Calu3 (cell line): ENCODE measurements at regions of chr1 and their contacts with region 1.

Region 1: DNA sequence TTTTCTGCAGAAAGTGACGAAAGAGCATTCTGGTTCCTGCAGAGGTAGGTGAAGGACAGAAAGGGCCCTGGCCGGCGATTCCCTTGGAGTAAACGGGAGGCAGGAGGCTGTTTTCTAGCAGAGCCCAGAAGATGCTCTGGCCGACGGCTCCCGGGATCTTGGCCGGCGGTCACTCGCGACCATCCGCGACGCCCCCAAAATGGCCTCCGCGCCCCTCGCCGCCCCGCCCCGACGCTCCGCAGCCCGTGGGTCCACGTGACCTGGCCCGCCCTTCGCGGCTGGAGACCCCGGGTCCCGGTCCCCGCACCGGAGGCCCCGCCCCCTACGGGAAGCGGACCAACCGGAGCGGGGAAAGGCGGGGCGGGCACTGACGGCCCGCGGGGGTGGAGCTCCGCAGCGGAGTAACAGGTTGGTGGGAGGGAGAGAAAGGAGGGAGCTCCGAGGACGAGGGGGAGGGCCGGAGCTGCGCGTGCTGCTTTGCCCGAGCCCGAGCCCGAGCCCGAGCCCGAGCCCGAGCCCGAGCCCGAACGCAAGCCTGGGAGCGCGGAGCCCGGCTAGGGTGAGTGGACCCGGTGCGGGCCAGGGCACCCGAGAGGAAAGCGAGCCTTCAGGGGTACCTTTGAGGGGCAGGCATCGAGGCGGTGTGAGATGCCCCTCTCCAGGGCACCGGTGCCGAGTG is at the start of gene CGN:
- DNase-seq: peak; percentile 98
- H3K4me3 Mint-ChIP-seq: peak within 1 kb of the TSS; percentile 76
- H3K27ac Mint-ChIP-seq: peak within 1 kb of the TSS; percentile 87
- H3K4me1 Mint-ChIP-seq: peaks cover 48% of the 10 kb centered on the region
- H3K27me3 Mint-ChIP-seq: no peaks in the 10 kb centered on the region
- CTCF ChIP-seq: no peak
- total RNA-seq, gene CGN: 113 and 131 TPM in 2 replicates

Region 2: DNA sequence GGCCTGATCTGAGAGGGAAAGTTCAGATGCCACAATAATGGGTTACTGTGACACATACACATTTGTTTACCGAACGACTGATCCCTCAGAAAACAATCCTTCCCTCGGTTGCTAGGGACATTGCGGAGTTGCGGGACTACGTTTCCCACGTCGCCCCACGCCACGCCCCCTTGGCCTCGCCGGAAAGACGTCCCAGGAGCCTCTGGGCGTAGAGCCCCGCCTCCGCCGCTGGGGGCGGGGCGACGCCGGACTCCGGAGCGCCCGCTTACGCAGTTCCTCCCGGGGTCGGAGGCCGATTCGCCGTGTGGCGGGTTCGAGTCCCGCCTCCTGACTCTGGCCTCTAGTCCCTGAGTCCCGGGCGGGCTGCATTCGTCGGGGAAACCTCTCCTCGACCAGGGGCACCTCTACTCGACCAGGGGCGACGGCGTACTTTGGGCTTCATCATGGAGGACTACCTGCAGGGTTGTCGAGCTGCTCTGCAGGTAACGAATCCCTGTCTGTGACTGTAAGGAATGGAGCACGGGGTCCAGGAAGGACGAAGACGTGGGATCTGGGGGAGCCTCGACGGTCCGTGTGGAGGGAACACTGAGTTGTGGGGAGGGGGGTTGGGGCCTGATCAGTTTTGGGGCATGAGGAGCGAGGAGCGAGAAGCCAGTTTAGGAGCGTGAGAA is 502.8 kb before region 1 on chr1 and contains the start of gene PRUNE1:
- CTCF ChIA-PET with region 1: no interaction called
- intact Hi-C with region 1: no loop called
- DNase-seq: peak; percentile 99
- H3K4me3 Mint-ChIP-seq: peak within 1 kb of the TSS; percentile 96
- H3K27ac Mint-ChIP-seq: peak within 1 kb of the TSS; percentile 95
- H3K4me1 Mint-ChIP-seq: peaks cover 37% of the 10 kb centered on the region
- H3K27me3 Mint-ChIP-seq: no peaks in the 10 kb centered on the region
- CTCF ChIP-seq: no peak
- total RNA-seq, gene PRUNE1: 15.9 and 16.0 TPM in 2 replicates

Region 3: DNA sequence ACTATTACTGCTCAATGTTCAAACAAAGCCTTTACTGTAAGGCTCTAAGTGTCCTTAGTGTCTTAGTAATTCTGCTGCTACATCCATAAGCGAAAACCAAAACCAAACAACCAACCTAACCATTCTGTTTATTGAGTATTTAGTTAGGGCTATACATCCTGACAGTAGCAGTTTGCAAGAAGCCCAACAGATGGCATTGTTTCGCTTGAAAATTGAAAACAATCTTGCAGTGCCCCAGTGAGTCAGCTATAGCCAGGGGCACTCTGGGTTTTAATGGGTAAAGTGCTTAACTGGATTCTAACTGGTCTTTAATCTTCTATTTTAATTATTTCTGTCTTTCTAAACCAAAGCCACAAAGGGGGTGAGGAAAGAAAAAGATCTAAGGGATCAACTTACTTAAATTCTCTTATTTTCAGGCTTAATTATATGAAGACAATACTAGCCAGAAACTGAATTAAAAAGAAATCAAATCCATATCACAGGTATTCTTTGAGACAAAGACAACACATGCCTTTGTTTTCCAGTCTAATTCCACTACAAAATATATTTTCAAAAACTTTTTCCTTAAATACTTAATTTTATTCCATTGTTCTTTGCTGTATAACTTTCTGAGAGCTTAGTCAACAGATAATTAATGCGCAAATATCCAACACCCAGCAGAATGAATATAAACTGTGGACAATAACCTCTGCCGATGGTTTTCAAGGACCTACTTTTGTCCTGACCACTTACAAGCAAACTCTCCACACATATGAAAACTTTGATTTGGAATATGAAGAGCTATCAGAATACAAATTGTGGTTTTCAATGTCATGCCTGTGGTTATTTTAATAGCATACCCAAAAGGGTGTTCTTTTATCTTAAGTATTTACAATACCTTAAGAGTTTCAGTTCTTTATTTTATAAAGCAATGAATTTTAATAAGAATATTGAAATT is 67.0 kb before region 1 on chr1:
- CTCF ChIA-PET with region 1: interaction called, 7 read pairs
- intact Hi-C with region 1: loop called (anchors 1 kb)
- DNase-seq: peak; percentile 76
- H3K4me3 Mint-ChIP-seq: no peak overlapping the region
- H3K27ac Mint-ChIP-seq: peak overlapping the region; percentile 9
- H3K4me1 Mint-ChIP-seq: peaks cover 8% of the 10 kb centered on the region
- H3K27me3 Mint-ChIP-seq: no peaks in the 10 kb centered on the region
- CTCF ChIP-seq: peak; percentile 64

Region 4: GRCh38 chr1:151459331-151460046 is 51.6 kb before region 1 on chr1 and contains the start of gene POGZ:
- CTCF ChIA-PET with region 1: interaction called, 4 read pairs
- intact Hi-C with region 1: loop called (anchors 1 kb)
- DNase-seq: peak; percentile 98
- H3K4me3 Mint-ChIP-seq: peak within 1 kb of the TSS; percentile 78
- H3K27ac Mint-ChIP-seq: peak within 1 kb of the TSS; percentile 98
- H3K4me1 Mint-ChIP-seq: no peaks in the 10 kb centered on the region
- H3K27me3 Mint-ChIP-seq: no peaks in the 10 kb centered on the region
- CTCF ChIP-seq: no peak
- total RNA-seq, gene POGZ: 118 and 128 TPM in 2 replicates

Region 5: DNA sequence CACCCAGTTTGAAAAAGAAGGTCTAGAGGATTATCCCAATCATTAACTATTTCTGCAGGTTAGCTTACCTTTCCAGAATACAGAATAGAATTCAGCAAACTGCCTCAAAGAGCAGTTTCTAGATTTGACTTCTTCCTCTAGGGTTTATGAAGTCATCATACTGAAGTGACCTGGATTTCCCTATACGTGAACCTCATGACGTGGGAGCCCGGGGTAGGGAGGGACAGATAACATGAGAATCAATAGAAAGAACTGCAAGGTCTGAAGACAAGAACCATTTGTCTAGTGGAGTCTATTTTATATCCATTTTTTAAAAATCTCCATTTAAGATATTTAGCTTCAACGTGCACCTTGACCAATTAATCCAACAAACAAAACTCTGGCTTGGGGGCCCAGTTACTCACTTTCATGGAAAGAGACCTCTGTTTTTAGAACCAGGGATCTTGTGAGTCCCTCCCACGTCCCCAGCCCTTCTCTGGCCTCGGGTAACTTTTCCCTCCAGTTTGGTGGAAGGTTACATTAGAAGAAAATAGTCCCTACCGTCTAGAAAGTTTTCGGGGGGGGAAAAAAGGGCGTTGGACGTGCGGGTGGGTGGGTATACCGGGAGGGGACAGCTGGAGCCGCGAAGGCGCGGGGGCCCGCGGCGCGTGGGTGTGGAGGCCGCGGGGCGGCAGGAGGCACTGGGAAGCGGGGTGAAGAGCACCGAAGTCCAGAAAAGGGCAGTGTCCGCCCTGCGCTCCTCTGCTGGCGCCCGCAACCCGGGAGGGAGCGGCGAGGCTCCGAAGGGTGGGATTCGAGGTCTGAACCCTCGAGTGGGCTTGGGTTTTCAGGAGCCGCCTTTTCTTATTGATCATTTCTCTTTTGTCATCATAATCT is 38.0 kb before region 1 on chr1:
- CTCF ChIA-PET with region 1: interaction called, 8 read pairs
- intact Hi-C with region 1: loop called (anchors 2 kb)
- DNase-seq: peak; percentile 48
- H3K4me3 Mint-ChIP-seq: peak overlapping the region; percentile 70
- H3K27ac Mint-ChIP-seq: peak overlapping the region; percentile 64
- H3K4me1 Mint-ChIP-seq: peaks cover 9% of the 10 kb centered on the region
- H3K27me3 Mint-ChIP-seq: no peaks in the 10 kb centered on the region
- CTCF ChIP-seq: no peak